HEK293 (cell line): ENCODE measurements at regions of chr3 and their contacts with region 1.

Region 1: GRCh38 chr3:70090322-70090913 is 90.9 kb downstream of the SAMMSON start:
- H3K4me3 ChIP-seq: no peak overlapping the region
- H3K27ac ChIP-seq: no peak overlapping the region
- H3K4me1 ChIP-seq: no peaks in the 10 kb centered on the region
- CTCF ChIP-seq: no peak

Region 2: DNA sequence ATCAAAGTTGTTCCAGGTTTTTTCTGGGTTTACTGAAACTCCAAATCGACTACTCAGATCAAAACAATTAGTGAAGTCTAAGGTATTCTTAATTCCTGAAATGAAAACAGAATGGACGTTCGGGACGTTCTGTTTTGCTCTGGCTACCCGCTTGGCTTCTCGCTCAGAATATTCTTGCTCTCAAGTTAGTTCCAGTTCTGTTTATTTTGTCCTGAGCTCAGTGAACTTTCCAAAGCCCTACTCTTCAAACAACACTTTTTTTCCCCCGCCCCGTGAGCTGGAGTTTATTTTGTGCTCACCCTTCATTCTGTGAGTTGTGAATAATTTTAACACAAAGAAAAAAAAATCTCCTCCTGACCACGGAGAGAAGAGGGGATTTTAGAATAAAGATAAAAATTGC is 18.2 kb before region 1 on chr3:
- CTCF ChIA-PET with region 1: interaction called, 12 read pairs
- POLR2A ChIA-PET with region 1: no interaction called
- H3K4me3 ChIP-seq: no peak overlapping the region
- H3K27ac ChIP-seq: no peak overlapping the region
- H3K4me1 ChIP-seq: no peaks in the 10 kb centered on the region
- CTCF ChIP-seq: no peak